ENCODE measurements at regions of chr7 and their contacts with region 1.

Region 1: GRCh38 chr7:44565097-44565794 is 8.5 kb downstream of the DDX56 start:
- DNase-seq: peak; percentile 74 to 88
- ATAC-seq: peak; percentile 88
- H3K4me3 ChIP-seq: no peak overlapping the region
- H3K27ac ChIP-seq: no peak overlapping the region
- H3K4me1 ChIP-seq: no peaks in the 10 kb centered on the region
- H3K27me3 ChIP-seq: no peaks in the 10 kb centered on the region

Region 2: GRCh38 chr7:44059219-44060090 is 505.8 kb before region 1 on chr7:
- intact Hi-C with region 1: loop called in 1 of 2 experiments (anchors 10 kb)
- DNase-seq: peak; percentile 44 to 55
- ATAC-seq: no peak
- H3K4me3 ChIP-seq: no peak overlapping the region
- H3K27ac ChIP-seq: no peak overlapping the region
- H3K4me1 ChIP-seq: no peaks in the 10 kb centered on the region
- H3K27me3 ChIP-seq: no peaks in the 10 kb centered on the region

Region 3: DNA sequence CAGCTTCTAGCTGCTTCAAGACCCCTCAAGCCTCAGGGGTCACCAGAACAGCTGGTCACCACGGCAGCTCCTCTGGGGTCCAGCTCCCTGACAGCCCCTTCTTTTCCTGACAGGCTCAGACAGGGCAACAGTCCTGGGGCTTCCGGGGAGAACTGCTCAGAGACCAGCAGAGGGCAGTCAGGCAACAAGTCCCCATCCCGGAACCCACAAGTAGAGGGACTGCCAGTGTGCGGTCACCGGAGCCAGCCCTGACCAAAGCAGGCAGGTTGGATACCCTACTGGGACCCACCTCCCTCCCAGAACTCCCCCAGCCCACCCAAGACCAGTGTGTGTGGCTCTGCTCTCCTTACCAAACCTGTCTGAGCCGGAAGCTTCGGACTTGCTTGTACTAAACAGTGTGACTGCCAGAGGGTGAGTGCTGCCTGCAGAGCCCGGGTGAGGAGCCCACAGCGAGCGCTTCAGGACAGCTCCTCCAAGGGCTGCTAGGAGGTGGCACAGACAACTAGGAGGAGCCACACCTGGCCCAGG is 324.2 kb before region 1 on chr7:
- intact Hi-C with region 1: loop called in 1 of 2 experiments (anchors 5 kb)
- DNase-seq: peak; percentile 87 to 91
- ATAC-seq: peak; percentile 76
- H3K4me3 ChIP-seq: no peak overlapping the region
- H3K27ac ChIP-seq: no peak overlapping the region
- H3K4me1 ChIP-seq: no peaks in the 10 kb centered on the region
- H3K27me3 ChIP-seq: no peaks in the 10 kb centered on the region

Region 4: GRCh38 chr7:44490351-44491200 is 74.7 kb before region 1 on chr7 and contains the start of gene NUDCD3:
- intact Hi-C with region 1: loop called in 1 of 2 experiments (anchors 5 kb)
- DNase-seq: peak; percentile 87 to 93
- ATAC-seq: peak; percentile 97
- H3K4me3 ChIP-seq: peak within 1 kb of the TSS; percentile 87 to 95
- H3K27ac ChIP-seq: peak within 1 kb of the TSS; percentile 97 to 98
- H3K4me1 ChIP-seq: peaks cover 2 to 11% of the 10 kb centered on the region in 2 donors
- H3K27me3 ChIP-seq: no peaks in the 10 kb centered on the region
- total RNA-seq, gene NUDCD3: 82.4 to 111 TPM

Measured in aorta (tissue), 5 donors.